ENCODE measurements at regions of chr17 and their contacts with region 1.

Region 1: DNA sequence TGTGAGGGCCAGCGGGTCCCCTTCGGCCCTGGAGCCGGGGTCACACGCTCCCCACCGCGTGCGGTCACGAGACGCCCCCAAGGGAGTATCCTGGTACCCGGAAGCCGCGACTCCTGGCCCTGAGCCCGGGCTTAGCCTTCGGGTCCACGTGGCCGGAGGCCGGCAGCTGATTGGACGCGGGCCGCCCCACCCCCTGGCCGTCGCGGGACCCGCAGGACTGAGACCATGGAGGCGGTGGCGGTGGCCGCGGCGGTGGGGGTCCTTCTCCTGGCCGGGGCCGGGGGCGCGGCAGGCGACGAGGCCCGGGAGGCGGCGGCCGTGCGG is at the start of gene NAGLU:
- DNase-seq: peak; percentile 84
- H3K4me3 Mint-ChIP-seq: peak within 1 kb of the TSS; percentile 81
- H3K27ac Mint-ChIP-seq: peak within 1 kb of the TSS; percentile 87
- H3K4me1 Mint-ChIP-seq: peaks cover 18% of the 10 kb centered on the region
- H3K27me3 Mint-ChIP-seq: no peaks in the 10 kb centered on the region
- CTCF ChIP-seq: no peak
- total RNA-seq, gene NAGLU: 21.0 and 29.5 TPM in 2 replicates

Region 2: DNA sequence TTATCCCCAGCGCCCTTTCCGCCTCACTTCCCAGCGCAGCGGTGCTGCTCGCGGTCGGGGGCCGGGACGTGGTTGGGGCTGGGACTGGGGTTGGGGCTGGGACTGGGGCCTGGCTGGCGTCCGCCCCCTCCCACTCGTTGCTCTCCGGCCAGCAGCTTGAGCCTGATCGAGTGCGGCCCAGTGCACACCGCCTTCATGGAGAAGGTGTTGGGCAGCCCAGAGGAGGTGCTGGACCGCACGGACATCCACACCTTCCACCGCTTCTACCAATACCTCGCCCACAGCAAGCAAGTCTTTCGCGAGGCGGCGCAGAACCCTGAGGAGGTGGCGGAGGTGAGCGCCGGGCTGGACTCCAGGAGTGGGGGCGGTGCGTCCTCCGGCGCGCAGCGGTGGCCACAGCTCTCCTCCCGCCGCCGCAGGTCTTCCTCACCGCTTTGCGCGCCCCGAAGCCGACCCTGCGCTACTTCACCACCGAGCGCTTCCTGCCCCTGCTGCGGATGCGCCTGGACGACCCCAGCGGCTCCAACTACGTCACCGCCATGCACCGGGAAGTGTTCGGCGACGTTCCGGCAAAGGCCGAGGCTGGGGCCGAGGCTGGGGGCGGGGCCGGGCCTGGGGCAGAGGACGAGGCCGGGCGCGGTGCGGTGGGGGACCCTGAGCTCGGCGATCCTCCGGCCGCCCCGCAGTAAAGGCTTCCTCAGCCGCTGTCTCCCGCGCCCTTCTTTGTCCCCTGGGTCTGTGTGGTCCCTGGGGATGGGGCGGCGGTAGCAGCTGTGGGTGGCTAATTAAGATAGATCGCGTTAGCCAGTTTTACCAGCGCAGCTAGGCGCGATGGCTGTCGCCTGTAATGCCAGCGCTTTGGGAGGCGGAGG is 18.5 kb after region 1 on chr17:
- CTCF ChIA-PET with region 1: interaction called, 5 read pairs
- POLR2A ChIA-PET with region 1: interaction called, 38 read pairs
- intact Hi-C with region 1: no loop called
- DNase-seq: peak; percentile 66
- H3K4me3 Mint-ChIP-seq: peak overlapping the region; percentile 91
- H3K27ac Mint-ChIP-seq: peak overlapping the region; percentile 89
- H3K4me1 Mint-ChIP-seq: peaks cover 7% of the 10 kb centered on the region
- H3K27me3 Mint-ChIP-seq: no peaks in the 10 kb centered on the region
- CTCF ChIP-seq: no peak

Region 3: GRCh38 chr17:42566883-42567573 is 31.0 kb after region 1 on chr17 and contains the start of gene MLX:
- CTCF ChIA-PET with region 1: interaction called, 4 read pairs
- POLR2A ChIA-PET with region 1: interaction called, 22 read pairs
- intact Hi-C with region 1: no loop called
- DNase-seq: peak; percentile 90
- H3K4me3 Mint-ChIP-seq: peak within 1 kb of the TSS; percentile 79
- H3K27ac Mint-ChIP-seq: peak within 1 kb of the TSS; percentile 90
- H3K4me1 Mint-ChIP-seq: peaks cover 13% of the 10 kb centered on the region
- H3K27me3 Mint-ChIP-seq: no peaks in the 10 kb centered on the region
- CTCF ChIP-seq: no peak
- total RNA-seq, gene MLX: 37.3 and 39.6 TPM in 2 replicates

Region 4: GRCh38 chr17:43151880-43152456 is 616.0 kb after region 1 on chr17:
- CTCF ChIA-PET with region 1: no interaction called
- POLR2A ChIA-PET with region 1: no interaction called
- intact Hi-C with region 1: no loop called
- DNase-seq: no peak
- H3K4me3 Mint-ChIP-seq: no peak overlapping the region
- H3K27ac Mint-ChIP-seq: no peak overlapping the region
- H3K4me1 Mint-ChIP-seq: no peaks in the 10 kb centered on the region
- H3K27me3 Mint-ChIP-seq: no peaks in the 10 kb centered on the region
- CTCF ChIP-seq: no peak